A673 (cell line): ENCODE measurements at regions of chr6 and their contacts with region 1.

Region 1: DNA sequence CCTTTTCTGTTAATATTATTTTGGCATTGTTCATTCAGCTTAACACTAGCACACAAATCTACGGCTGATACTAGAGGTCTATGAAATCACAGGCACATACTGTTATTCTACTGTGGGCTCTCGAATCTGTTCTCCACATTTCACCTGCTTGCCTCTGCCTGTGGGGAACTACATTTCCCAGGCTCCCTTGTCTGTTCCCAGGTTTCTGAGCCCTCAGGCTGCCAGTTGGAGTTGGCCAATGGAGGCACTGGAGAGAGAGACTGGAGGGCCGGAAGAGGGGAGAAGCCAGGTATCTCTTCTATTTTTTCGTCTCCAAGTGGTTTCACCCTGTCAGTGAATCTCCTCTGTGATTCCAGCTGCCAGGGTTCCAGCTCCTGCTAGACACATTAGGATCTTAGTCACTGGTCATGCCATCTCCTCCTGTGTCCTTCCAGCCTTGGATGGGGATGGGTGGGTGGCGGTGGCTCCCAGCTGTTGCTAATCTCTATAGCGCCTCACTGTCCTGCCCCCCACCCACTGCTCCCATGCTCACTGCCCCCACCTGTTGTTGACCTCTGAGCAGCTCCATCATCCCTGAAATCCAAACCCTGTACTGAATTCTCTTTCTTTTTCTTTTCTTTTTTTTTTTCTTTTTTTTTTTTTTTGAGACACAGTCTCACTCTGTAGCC is 188.2 kb downstream of the LRFN2 start:
- DNase-seq: no peak
- H3K4me3 ChIP-seq: no peak overlapping the region
- H3K27ac ChIP-seq: peak overlapping the region; percentile 10
- H3K4me1 ChIP-seq: peaks cover 5% of the 10 kb centered on the region
- H3K27me3 ChIP-seq: no peaks in the 10 kb centered on the region
- CTCF ChIP-seq: no peak

Region 2: GRCh38 chr6:40788661-40789655 is 390.0 kb after region 1 on chr6:
- CTCF ChIA-PET with region 1: interaction called, 11 read pairs
- POLR2A ChIA-PET with region 1: no interaction called
- intact Hi-C with region 1: no loop called
- DNase-seq: no peak
- H3K4me3 ChIP-seq: no peak overlapping the region
- H3K27ac ChIP-seq: no peak overlapping the region
- H3K4me1 ChIP-seq: no peaks in the 10 kb centered on the region
- H3K27me3 ChIP-seq: no peaks in the 10 kb centered on the region
- CTCF ChIP-seq: no peak